ENCODE measurements at regions of chr14 and their contacts with region 1.

Region 1: GRCh38 chr14:71403656-71404055 is 496.4 kb downstream of the PCNX1 start:
- DNase-seq: peak; percentile 51
- ATAC-seq: peak; percentile 85
- H3K4me3 ChIP-seq: no peak overlapping the region
- H3K27ac ChIP-seq: no peak overlapping the region
- H3K4me1 ChIP-seq: peaks cover 16% of the 10 kb centered on the region; the same call in 1 of the 2 replicates
- H3K27me3 ChIP-seq: no peaks in the 10 kb centered on the region
- CTCF ChIP-seq: 0 out of 2 replicates have a peak, but pooled peaks have one; percentile 23

Region 2: DNA sequence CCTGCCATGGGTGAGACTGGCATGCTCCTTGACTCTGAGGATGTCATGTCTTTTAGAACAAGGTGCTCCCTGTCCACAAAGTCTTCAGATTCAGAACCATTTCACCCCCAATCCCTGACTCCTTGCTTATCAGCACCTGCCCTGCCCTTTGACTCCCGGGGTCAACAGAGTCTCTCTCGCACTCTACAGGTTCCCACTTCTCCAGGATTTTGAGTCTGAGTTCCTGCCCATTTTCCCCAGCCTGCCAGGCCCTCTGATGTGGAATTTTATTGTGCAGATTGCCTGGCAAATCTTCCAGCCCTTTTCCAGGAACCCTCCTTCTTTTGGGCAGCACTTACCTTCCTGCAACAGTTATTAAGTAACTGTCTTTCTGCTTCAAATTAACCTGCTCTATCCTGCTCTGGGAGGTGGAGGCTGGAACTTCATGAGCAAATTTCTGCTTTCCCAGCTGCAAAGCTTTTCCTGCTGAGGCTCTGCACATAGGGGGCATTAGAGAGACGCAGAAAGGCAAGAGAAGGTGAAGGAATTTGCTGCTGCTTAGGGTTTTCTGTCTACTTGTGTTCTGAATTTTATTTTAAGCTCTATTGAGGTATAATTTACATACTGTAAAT is 237.4 kb before region 1 on chr14:
- CTCF ChIA-PET with region 1: interaction called, 11 read pairs
- POLR2A ChIA-PET with region 1: no interaction called
- intact Hi-C with region 1: no loop called
- DNase-seq: peak; percentile 79
- ATAC-seq: peak; percentile 68
- H3K4me3 ChIP-seq: no peak overlapping the region
- H3K27ac ChIP-seq: no peak overlapping the region
- H3K4me1 ChIP-seq: no peaks in the 10 kb centered on the region
- H3K27me3 ChIP-seq: no peaks in the 10 kb centered on the region
- CTCF ChIP-seq: peak; percentile 80

Region 3: DNA sequence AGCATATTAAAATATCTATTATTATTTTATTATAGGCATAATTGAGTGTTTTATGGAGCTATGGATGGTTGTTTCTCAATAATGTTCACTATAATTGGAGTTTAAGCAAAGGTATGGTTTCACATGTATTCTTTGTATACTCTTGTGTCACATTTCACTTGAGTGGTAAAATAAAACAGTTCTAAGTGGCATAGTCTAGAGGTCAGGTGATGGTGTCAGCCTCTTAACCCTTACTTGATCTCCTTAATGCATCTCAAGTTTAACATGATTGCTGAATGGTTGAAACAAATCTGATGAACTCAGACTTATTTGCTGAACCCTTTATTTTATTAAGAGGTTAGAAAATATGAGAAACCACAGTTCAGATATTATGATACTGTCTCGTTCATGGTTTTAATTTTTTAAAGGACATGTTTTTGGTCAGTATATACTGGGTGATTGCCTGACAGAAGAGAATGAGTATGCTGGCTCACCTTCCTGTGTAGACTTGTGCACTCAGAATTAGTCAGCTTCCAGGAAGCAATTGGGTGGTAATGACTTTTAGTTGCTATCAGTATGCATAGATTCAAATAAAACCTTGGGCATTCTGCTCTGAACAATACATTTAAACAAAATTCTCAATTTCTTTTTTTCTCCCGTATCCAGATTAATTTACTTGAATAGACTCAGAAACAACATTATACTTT is 31.8 kb before region 1 on chr14:
- CTCF ChIA-PET with region 1: no interaction called
- POLR2A ChIA-PET with region 1: no interaction called
- intact Hi-C with region 1: loop called (anchors 2 kb)
- DNase-seq: peak; percentile 78
- ATAC-seq: peak; percentile 98
- H3K4me3 ChIP-seq: peak overlapping the region; percentile 51
- H3K27ac ChIP-seq: peak overlapping the region; percentile 89
- H3K4me1 ChIP-seq: peaks cover 30% of the 10 kb centered on the region
- H3K27me3 ChIP-seq: no peaks in the 10 kb centered on the region
- CTCF ChIP-seq: no peak